ENCODE measurements at regions of chr6 and their contacts with region 1.

Region 1: DNA sequence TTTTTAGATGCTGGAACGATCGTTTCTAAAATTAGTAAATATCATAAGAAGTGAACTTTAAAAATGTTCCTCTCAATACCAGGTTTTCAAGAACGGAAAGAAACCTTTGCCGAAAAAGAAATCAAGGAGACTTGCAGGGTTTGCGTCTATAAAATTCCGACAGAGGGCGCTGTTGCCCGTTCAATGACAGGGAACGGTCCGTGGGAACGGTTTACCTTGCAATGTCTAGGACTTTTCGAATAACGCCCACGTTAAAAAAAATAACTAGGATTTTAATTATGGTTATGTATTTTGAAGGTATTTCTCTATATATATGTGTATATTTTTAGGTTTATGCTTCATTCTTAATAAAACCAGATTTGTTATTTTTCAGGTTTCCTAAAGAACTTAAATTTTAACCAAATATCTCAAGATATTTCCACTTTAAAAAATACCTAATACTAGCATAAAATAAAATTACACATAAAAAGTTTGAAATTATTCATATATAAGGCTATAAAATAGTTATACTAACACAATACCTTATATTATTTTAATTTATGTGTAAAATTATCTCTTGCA is 2.5 kb upstream of the TFAP2B start:
- DNase-seq: peak; percentile 67
- ATAC-seq: peak; percentile 93
- H3K4me3 ChIP-seq: peak overlapping the region; percentile 43 to 90 (median 62); a peak in 5 of 6 replicates
- H3K27ac ChIP-seq: no peak overlapping the region
- H3K4me1 ChIP-seq: no peaks in the 10 kb centered on the region
- H3K27me3 ChIP-seq: peaks cover 5 to 34% of the 10 kb centered on the region in 2 experiments
- CTCF ChIP-seq: peak; percentile 87
- EP300 ChIP-seq: no peak
- POLR2A ChIP-seq: no peak
- RAD21 ChIP-seq: peak; percentile 76

Region 2: GRCh38 chr6:51350308-51350904 is 534.2 kb after region 1 on chr6:
- CTCF ChIA-PET with region 1: interaction called, 6 read pairs
- POLR2A ChIA-PET with region 1: no interaction called
- in situ Hi-C with region 1: loop called (anchors 10 kb)
- intact Hi-C with region 1: no loop called
- DNase-seq: no peak
- ATAC-seq: no peak; the same call in 2 of the 3 replicates
- H3K4me3 ChIP-seq: no peak overlapping the region
- H3K27ac ChIP-seq: no peak overlapping the region
- H3K4me1 ChIP-seq: no peaks in the 10 kb centered on the region
- H3K27me3 ChIP-seq: no peaks in the 10 kb centered on the region
- CTCF ChIP-seq: no peak
- EP300 ChIP-seq: no peak
- POLR2A ChIP-seq: no peak
- RAD21 ChIP-seq: no peak

Region 3: DNA sequence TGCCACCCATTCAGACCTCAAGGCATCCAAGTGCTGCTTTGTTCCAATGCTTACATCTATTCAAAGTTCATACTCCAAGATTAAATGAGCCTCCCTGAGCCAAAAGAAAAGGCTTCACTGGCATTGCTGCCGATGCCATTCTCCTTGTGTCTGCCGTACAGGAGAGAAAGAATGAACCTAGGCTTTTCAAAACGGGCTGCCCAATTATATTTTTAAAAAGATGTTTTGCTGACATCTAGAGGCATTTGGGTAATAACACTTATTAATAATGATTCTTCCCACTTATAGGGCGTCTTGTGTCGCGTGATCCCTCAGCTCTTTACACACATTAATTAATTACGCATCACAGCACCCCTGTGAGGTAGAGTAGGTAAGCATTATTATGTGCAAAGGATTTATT is 725.7 kb after region 1 on chr6:
- CTCF ChIA-PET with region 1: interaction called, 5 read pairs
- POLR2A ChIA-PET with region 1: no interaction called
- in situ Hi-C with region 1: no loop called
- intact Hi-C with region 1: loop called (anchors 2 kb)
- DNase-seq: no peak
- ATAC-seq: no peak
- H3K4me3 ChIP-seq: no peak overlapping the region
- H3K27ac ChIP-seq: no peak overlapping the region
- H3K4me1 ChIP-seq: no peaks in the 10 kb centered on the region
- H3K27me3 ChIP-seq: no peaks in the 10 kb centered on the region; a peak in 1 of 5 replicates
- CTCF ChIP-seq: peak; percentile 27; the same call in 1 of the 2 replicates
- EP300 ChIP-seq: no peak
- POLR2A ChIP-seq: no peak
- RAD21 ChIP-seq: no peak

Region 4: DNA sequence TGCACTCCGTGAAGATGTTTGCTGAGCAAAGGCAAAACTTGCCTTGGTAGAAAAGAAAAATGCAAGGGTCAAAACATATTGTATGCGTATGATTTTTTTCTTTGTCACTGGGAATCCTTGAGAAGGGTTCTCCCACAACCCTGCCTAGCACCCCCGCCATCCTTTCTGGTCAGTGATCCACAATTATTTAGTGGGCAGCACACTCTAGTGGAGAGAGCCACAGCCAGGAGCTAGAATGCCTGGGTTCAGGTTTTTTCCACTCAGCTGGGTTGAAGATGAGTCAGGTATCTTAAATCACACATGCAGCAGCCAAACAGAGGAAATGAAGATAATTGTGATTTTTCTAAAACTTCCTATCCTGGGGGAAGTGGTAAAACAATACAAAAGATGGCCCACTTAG is 1028.1 kb after region 1 on chr6:
- CTCF ChIA-PET with region 1: no interaction called
- POLR2A ChIA-PET with region 1: no interaction called
- in situ Hi-C with region 1: no loop called
- intact Hi-C with region 1: loop called (anchors 5 kb)
- DNase-seq: no peak
- ATAC-seq: no peak
- H3K4me3 ChIP-seq: no peak overlapping the region
- H3K27ac ChIP-seq: no peak overlapping the region
- H3K4me1 ChIP-seq: no peaks in the 10 kb centered on the region; the same call in 1 of the 2 replicates
- H3K27me3 ChIP-seq: 0 out of 5 replicates have a peak, but pooled peaks cover 0 to 1% of the 10 kb centered on the region in 2 experiments
- CTCF ChIP-seq: peak; percentile 43; the same call in 1 of the 2 replicates
- EP300 ChIP-seq: no peak
- POLR2A ChIP-seq: no peak
- RAD21 ChIP-seq: no peak

Region 5: DNA sequence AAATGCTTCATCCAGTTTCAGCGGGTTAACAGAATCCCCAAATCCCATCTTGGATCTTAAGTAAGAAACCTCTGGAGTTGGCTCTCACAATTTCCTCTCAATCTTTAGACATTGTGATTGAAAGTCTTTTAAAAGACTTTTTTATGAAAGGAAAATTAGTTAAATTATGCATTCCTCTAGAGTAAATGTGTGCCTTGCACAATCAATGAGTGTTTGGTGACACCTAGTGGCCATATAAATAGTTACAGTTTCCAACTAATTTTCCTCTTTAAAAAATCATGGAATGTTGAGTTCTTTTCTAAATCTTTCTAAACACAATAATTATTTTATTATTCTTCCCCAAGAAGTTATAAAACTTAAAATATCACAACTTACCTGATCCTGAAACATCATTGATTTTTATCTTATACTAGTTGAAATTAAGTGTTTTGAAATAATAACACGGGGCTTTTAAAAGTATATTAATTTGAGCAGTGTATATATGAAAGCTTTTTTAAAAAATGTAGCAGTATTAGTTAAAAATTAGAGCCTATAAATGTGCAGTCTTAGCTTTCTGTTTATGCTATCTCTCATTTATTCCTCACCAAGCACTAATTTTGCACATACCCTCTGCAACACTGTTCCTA is 1204.9 kb after region 1 on chr6:
- CTCF ChIA-PET with region 1: interaction called, 32 read pairs
- POLR2A ChIA-PET with region 1: no interaction called
- in situ Hi-C with region 1: loop called (anchors 5 kb)
- intact Hi-C with region 1: loop called (anchors 1 kb)
- DNase-seq: peak; percentile 36
- ATAC-seq: no peak; the same call in 2 of the 3 replicates
- H3K4me3 ChIP-seq: no peak overlapping the region
- H3K27ac ChIP-seq: no peak overlapping the region
- H3K4me1 ChIP-seq: peaks cover 21% of the 10 kb centered on the region
- H3K27me3 ChIP-seq: no peaks in the 10 kb centered on the region
- CTCF ChIP-seq: peak; percentile 73
- EP300 ChIP-seq: no peak
- POLR2A ChIP-seq: no peak
- RAD21 ChIP-seq: peak; percentile 52; the same call in 1 of the 2 replicates